Natural killer cell (primary cell): ENCODE measurements at regions of chr18 and their contacts with region 1.

Region 1: DNA sequence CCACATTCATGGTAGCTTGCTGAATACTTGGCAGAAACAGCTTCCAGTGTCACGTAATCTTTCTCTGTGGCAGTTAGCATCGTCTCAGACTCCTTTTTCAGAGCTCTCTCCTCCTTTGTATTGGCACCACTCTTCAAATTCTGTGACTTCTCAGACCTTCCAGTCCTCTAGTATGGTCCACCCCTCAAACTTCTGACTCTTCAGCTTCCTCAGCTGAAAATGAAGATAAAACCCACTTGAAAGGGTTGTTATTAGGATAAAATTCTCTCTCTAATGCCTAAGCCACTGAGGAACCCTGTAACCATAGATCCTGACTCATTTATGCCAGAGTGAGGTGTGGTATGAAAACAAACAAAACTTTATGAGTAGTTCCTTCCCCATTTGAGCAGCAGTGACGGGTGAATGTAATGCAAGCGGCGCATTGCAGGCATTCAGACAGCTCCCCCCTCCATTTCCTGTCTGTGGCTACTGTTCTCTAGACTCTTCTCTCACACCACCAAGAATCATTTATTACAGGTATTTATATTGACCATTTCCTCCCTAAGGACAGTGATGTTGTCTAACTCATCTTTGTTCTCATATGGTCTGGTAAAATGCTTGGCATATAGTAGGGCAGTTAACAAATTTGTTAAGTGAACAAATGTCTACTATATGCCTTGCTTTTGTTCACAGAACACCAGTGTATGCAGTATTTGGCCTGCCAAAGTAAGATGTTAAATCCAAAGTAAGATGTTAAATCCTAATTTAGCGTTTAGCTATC is 35.3 kb downstream of the GALNT1 start:
- DNase-seq: peak; percentile 41 to 79
- ATAC-seq: peak; percentile 94 to 98 (median 96)
- H3K4me3 ChIP-seq: no peak overlapping the region
- H3K4me3 Mint-ChIP-seq: no peak overlapping the region
- H3K27ac ChIP-seq: peak overlapping the region; percentile 76
- H3K27ac Mint-ChIP-seq: no peak overlapping the region
- H3K4me1 ChIP-seq: peaks cover 6% of the 10 kb centered on the region
- H3K4me1 Mint-ChIP-seq: peaks cover 21 to 30% of the 10 kb centered on the region in 2 donors
- H3K27me3 ChIP-seq: no peaks in the 10 kb centered on the region
- H3K27me3 Mint-ChIP-seq: no peaks in the 10 kb centered on the region
- CTCF ChIP-seq: no peak

Region 2: GRCh38 chr18:35580701-35581539 is 35.9 kb before region 1 on chr18:
- intact Hi-C with region 1: loop called (anchors 5 kb)
- DNase-seq: peak; percentile 56 to 80
- ATAC-seq: peak; percentile 72 to 78 (median 77)
- H3K4me3 ChIP-seq: peak overlapping the region; percentile 54
- H3K4me3 Mint-ChIP-seq: peak overlapping the region; percentile 71
- H3K27ac ChIP-seq: peak overlapping the region; percentile 72
- H3K27ac Mint-ChIP-seq: peak overlapping the region in 1 of 2 donors; percentile 55
- H3K4me1 ChIP-seq: peaks cover 15% of the 10 kb centered on the region
- H3K4me1 Mint-ChIP-seq: peaks cover 21 to 27% of the 10 kb centered on the region in 2 donors
- H3K27me3 ChIP-seq: no peaks in the 10 kb centered on the region
- H3K27me3 Mint-ChIP-seq: peaks cover 0 to 3% of the 10 kb centered on the region in 2 donors
- CTCF ChIP-seq: no peak

Region 3: DNA sequence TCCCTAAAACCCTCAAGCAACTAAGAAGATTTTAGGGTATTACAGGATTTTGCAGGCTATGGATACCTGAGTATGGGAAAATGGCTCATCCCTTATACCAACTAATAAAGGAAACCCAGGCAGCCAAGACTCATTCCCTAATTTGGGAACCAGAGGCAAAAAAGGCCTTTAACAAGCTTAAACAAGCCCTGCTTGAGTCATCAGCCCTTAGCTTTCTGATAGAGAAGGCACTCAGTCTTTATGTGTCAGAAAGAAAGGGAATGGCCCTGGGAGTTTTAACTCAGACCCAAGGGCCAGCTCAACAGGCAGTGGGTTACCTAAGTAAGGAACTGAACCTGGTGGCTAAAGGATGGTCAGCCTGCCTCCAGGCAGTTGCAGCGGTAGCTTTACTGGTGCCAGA is 258.7 kb after region 1 on chr18:
- intact Hi-C with region 1: no loop called
- DNase-seq: no peak
- ATAC-seq: no peak
- H3K4me3 ChIP-seq: no peak overlapping the region
- H3K4me3 Mint-ChIP-seq: no peak overlapping the region
- H3K27ac ChIP-seq: no peak overlapping the region
- H3K27ac Mint-ChIP-seq: no peak overlapping the region
- H3K4me1 ChIP-seq: no peaks in the 10 kb centered on the region
- H3K4me1 Mint-ChIP-seq: no peaks in the 10 kb centered on the region
- H3K27me3 ChIP-seq: no peaks in the 10 kb centered on the region
- H3K27me3 Mint-ChIP-seq: peaks cover 3 to 10% of the 10 kb centered on the region in 2 donors
- CTCF ChIP-seq: no peak